Activated B cell treated with CpG ODN at 0.5 μM for 24 hours (primary cell): ENCODE measurements at regions of chr7 and their contacts with region 1.

Region 1: DNA sequence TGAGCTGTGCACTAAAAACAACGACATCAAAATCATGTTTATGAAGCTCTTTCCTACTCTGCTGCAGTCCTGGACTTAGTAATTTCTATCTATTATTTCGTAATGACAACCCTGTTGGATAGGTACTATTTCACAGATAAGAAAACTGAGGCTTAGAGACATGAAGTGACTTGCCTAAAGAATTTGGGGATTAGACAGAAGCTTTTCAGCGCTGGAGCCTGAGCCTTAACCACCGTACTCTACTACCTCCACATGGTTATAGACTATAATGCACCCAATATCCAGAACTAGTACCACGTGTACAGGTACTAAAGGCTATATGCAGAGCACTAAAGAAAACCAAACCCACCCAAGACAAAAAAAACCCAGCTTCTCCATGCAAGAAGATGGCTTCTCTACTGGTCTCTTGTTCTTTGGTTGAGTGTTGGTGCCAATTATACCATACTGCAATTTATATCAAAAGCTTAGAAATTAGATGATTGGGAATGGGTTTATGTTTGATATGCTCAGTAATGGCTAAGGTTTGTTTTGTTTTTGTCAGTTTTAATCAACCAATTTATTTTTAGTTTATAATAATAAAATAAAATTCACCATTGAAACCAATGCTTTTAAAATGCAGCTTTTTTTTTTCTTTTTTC is 6.5 kb upstream of the SNX10 start:
- DNase-seq: no peak
- ATAC-seq: peak; percentile 56
- H3K4me3 Mint-ChIP-seq: no peak overlapping the region
- H3K27ac Mint-ChIP-seq: no peak overlapping the region
- H3K4me1 Mint-ChIP-seq: peaks cover 7% of the 10 kb centered on the region
- H3K27me3 Mint-ChIP-seq: no peaks in the 10 kb centered on the region
- CTCF ChIP-seq: no peak

Region 2: GRCh38 chr7:26208040-26208439 is 77.1 kb before region 1 on chr7:
- CTCF ChIA-PET with region 1: no interaction called
- POLR2A ChIA-PET with region 1: no interaction called
- intact Hi-C with region 1: no loop called
- DNase-seq: no peak
- ATAC-seq: no peak
- H3K4me3 Mint-ChIP-seq: no peak overlapping the region
- H3K27ac Mint-ChIP-seq: no peak overlapping the region
- H3K4me1 Mint-ChIP-seq: peaks cover 40% of the 10 kb centered on the region
- H3K27me3 Mint-ChIP-seq: no peaks in the 10 kb centered on the region
- CTCF ChIP-seq: no peak

Region 3: GRCh38 chr7:26307226-26307625 is 22.1 kb after region 1 on chr7:
- CTCF ChIA-PET with region 1: no interaction called
- POLR2A ChIA-PET with region 1: no interaction called
- intact Hi-C with region 1: no loop called
- DNase-seq: no peak
- ATAC-seq: no peak
- H3K4me3 Mint-ChIP-seq: no peak overlapping the region
- H3K27ac Mint-ChIP-seq: peak overlapping the region; percentile 68
- H3K4me1 Mint-ChIP-seq: peaks cover 68% of the 10 kb centered on the region
- H3K27me3 Mint-ChIP-seq: no peaks in the 10 kb centered on the region
- CTCF ChIP-seq: no peak

Region 4: DNA sequence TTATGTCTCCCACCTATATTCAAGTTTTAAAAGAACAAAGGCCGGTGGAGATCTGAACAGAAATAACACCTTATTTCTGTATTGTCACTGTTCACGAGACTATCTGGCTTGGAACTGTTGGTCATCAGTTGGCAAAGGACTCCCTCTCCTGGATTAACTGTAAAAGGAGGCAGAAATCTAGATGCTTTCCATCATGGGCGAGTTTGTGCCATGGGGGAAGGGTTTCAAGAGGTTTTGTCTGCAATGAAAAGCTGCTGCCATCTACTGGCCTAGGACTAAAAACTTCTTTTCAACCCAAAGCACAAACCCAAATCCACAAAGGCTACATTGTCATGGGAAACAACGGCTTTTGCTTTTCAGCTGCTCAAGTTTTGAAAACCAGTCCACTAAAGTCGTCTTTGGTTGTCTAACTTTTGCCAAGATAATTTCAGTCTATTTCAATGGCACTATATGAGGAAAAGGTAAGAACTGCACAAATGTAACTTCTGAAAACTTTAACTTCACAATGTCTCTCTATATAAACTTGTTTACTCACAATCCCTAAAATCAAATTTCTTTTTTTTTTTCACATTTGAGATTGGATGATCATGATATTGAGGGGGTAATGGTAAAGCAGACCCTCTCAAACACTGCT is 382.5 kb after region 1 on chr7:
- CTCF ChIA-PET with region 1: no interaction called
- POLR2A ChIA-PET with region 1: no interaction called
- intact Hi-C with region 1: loop called (anchors 2 kb)
- DNase-seq: no peak
- ATAC-seq: peak; percentile 60
- H3K4me3 Mint-ChIP-seq: no peak overlapping the region
- H3K27ac Mint-ChIP-seq: no peak overlapping the region
- H3K4me1 Mint-ChIP-seq: peaks cover 18% of the 10 kb centered on the region
- H3K27me3 Mint-ChIP-seq: no peaks in the 10 kb centered on the region
- CTCF ChIP-seq: no peak

Region 5: GRCh38 chr7:26723129-26723528 is 438.0 kb after region 1 on chr7:
- CTCF ChIA-PET with region 1: no interaction called
- POLR2A ChIA-PET with region 1: no interaction called
- intact Hi-C with region 1: no loop called
- DNase-seq: no peak
- ATAC-seq: no peak
- H3K4me3 Mint-ChIP-seq: no peak overlapping the region
- H3K27ac Mint-ChIP-seq: peak overlapping the region; percentile 6
- H3K4me1 Mint-ChIP-seq: peaks cover 5% of the 10 kb centered on the region
- H3K27me3 Mint-ChIP-seq: no peaks in the 10 kb centered on the region
- CTCF ChIP-seq: no peak